Esophagus muscularis mucosa (tissue), 4 donors: ENCODE measurements at regions of chr13 and their contacts with region 1.

Region 1: DNA sequence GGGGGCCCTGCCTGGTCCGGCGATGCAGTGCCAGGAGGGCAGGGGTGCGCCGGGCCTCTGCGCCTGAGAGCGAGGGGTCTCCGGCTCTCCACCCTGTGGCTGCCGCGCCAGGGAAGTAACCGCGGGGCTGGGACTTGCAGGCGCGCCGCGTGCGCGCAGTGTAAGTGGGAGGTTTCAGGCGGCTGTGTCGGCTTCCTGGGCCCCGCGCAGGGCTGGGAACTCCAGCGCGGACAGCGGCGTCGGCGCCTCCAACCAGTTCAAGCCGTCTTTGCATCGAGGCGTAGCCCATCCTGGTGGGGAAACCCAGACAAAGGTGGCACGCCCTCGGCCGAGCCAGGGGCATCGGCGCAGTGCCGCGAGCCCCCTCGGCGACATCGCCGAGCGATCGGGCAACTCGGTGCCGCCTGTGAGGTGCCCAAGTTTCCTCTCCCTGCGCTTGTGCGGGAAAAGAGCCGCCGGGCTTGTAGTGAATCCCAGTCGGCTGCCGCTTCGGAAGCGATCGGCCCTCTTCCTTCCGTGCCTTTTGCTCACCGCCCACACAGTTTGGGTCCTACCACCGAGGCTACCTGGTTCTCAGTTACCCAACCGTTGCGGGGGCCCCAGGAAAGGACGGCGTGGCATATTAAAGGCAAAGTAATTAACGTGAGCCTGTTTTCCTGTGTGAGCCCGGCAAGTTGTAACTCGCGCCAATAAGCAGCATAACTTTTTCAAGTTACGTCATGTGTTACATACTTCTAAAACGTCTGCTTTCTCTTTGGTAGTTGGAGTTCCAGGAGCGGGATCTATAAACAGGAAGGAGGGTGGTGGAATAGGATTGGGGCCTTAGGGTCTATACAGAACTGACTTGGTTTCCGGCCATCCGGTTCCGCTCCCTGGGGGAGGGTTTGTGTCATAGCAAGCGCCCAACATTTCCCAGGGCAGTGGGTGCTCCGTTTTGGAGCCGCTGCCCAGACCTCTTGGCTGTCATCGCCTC is 1.2 kb downstream of the LRCH1 start:
- DNase-seq: no peak
- H3K4me3 ChIP-seq: peak overlapping the region; percentile 81 to 99 (median 90)
- H3K27ac ChIP-seq: peak overlapping the region; percentile 95 to 98 (median 96)
- H3K4me1 ChIP-seq: peaks cover 18 to 49% (median 46%) of the 10 kb centered on the region in 4 donors
- H3K27me3 ChIP-seq: no peaks in the 10 kb centered on the region
- CTCF ChIP-seq: peak in 2 of 3 experiments; percentile 15 to 55
- EP300 ChIP-seq: no peak
- POLR2A ChIP-seq: peak; percentile 46

Region 2: DNA sequence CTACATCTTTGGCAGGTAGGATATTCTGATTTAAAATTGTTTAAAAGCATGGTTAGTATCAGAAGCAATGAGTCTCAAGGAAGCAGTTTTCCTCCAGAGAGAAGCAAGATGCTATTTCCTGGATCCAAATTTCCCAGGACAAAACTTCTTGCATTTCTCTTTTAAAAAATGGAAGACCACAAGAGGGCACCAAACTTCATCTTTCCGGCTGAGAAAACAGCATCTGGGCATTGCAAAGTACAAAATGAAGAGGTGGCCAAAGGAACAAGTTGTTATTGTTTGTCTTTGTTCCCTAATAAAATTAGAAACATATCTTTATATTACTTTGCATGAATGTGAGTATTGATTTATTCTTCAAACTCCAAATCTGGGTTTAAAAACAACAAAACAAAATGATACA is 61.2 kb before region 1 on chr13:
- intact Hi-C with region 1: loop called (anchors 5 kb)
- DNase-seq: no peak
- H3K4me3 ChIP-seq: no peak overlapping the region
- H3K27ac ChIP-seq: no peak overlapping the region
- H3K4me1 ChIP-seq: peaks cover 0 to 16% (median 13%) of the 10 kb centered on the region in 4 donors
- H3K27me3 ChIP-seq: no peaks in the 10 kb centered on the region
- CTCF ChIP-seq: peak; percentile 54 to 63 (median 56)
- EP300 ChIP-seq: no peak
- POLR2A ChIP-seq: no peak

Region 3: DNA sequence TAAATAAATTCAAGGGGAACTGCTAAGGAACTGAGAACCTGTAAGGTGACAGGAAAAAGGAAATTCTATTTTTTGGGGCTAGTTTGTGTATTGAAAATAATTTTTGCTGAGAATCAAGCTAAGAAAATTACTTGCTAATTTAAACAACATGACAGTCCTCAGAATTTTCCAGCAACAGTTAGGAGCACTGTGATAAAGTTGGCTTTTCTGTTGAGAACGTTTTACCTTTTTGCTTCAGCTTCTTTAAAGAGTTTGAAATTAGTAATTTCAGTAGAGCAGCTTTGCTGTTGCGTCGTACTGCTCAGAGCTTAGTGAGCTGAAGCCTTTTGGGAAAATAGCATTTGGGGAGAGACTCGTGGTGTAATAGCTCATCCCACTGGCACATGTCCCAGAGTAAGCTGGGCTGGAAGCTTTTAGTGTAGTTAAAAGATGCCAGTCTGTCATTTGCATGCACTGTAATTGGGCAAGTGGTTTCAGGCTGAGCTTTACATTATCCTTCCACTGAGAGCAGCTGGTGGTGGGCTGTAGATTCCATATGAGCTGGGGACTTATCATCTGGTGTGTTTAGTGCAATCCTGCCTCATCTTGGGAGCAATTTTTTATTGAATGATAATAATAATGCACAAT is 68.6 kb after region 1 on chr13:
- intact Hi-C with region 1: loop called (anchors 5 kb)
- DNase-seq: no peak
- H3K4me3 ChIP-seq: peak overlapping the region in 1 of 4 donors; percentile 11
- H3K27ac ChIP-seq: peak overlapping the region; percentile 48 to 74 (median 67)
- H3K4me1 ChIP-seq: peaks cover 53 to 87% (median 76%) of the 10 kb centered on the region in 4 donors
- H3K27me3 ChIP-seq: no peaks in the 10 kb centered on the region
- CTCF ChIP-seq: no peak
- EP300 ChIP-seq: no peak
- POLR2A ChIP-seq: no peak

Region 4: DNA sequence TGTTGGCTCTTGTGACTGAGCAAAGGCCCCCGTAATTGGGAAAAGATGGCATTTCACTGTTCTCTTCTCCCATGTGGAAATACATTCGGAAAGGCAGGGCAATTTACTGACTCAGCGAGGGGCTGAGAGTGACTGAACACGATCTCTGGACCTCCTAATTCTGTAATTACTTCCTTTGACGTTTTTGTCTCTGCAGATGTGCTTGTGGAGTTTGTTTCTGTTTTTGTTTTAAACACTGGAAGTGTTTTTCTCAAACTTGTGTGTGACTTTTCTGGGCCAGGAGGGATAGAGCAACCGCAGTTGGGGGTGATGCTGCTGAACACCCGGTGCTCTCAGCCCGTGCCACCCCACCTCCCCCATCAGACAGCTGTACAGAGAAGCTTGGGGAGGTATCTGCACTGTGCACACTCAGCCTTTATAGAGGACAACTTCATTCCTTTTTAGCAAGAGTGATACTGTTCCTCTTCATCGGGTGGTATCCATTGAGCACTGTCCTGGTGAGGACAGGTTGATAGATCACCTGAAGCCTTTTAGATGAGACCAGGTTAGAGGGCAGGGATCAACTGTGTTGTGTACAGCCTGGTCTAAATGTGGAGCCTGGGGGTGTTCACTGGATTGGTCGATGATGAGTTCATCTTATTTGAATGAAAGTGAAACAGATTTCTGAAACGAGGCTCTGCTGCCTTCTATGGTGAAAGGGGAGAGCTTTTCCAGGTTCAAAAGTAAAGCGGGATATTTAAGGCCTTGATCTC is 125.4 kb after region 1 on chr13:
- intact Hi-C with region 1: loop called (anchors 5 kb)
- DNase-seq: no peak
- H3K4me3 ChIP-seq: peak overlapping the region; percentile 34 to 54 (median 45)
- H3K27ac ChIP-seq: peak overlapping the region; percentile 77 to 80 (median 78)
- H3K4me1 ChIP-seq: peaks cover 30 to 68% (median 65%) of the 10 kb centered on the region in 4 donors
- H3K27me3 ChIP-seq: no peaks in the 10 kb centered on the region
- CTCF ChIP-seq: peak in 1 of 3 experiments; percentile 21
- EP300 ChIP-seq: no peak
- POLR2A ChIP-seq: no peak

Region 5: DNA sequence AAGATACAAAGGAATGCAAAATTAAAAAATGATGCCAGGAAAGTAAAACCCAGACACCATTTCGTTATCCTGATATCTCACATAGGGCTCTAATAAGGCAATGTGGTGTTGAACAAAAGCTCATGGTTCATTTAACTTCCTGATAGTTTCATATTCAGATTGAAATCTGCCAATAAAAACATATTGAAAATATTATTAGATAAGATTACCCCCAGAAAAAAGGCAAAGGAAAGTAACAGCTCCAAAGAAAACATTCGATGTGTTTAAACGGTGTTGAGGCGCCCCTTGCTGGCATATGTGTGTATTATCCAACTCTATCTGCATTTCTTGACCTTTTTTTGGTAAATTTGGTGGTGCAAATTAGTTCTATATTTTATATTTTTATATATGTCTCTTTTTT is 166.9 kb after region 1 on chr13:
- intact Hi-C with region 1: loop called (anchors 1 kb)
- DNase-seq: no peak
- H3K4me3 ChIP-seq: no peak overlapping the region
- H3K27ac ChIP-seq: no peak overlapping the region
- H3K4me1 ChIP-seq: no peaks in the 10 kb centered on the region
- H3K27me3 ChIP-seq: no peaks in the 10 kb centered on the region
- CTCF ChIP-seq: peak; percentile 66 to 74 (median 67)
- EP300 ChIP-seq: no peak
- POLR2A ChIP-seq: no peak

Region 6: GRCh38 chr13:46796515-46797474 is 242.6 kb after region 1 on chr13 and contains the start of gene ESD:
- intact Hi-C with region 1: loop called (anchors 5 kb)
- DNase-seq: peak; percentile 99
- H3K4me3 ChIP-seq: peak within 1 kb of the TSS; percentile 69 to 91 (median 84)
- H3K27ac ChIP-seq: peak within 1 kb of the TSS; percentile 87 to 95 (median 89)
- H3K4me1 ChIP-seq: peaks cover 26 to 42% (median 38%) of the 10 kb centered on the region in 4 donors
- H3K27me3 ChIP-seq: no peaks in the 10 kb centered on the region
- CTCF ChIP-seq: no peak
- EP300 ChIP-seq: no peak
- POLR2A ChIP-seq: peak; percentile 38
- total RNA-seq, gene ESD: 115 to 150 (median 129) TPM

Region 7: GRCh38 chr13:46961719-46962118 is 407.5 kb after region 1 on chr13:
- intact Hi-C with region 1: no loop called
- DNase-seq: no peak
- H3K4me3 ChIP-seq: no peak overlapping the region
- H3K27ac ChIP-seq: no peak overlapping the region
- H3K4me1 ChIP-seq: no peaks in the 10 kb centered on the region
- H3K27me3 ChIP-seq: no peaks in the 10 kb centered on the region
- CTCF ChIP-seq: no peak
- EP300 ChIP-seq: no peak
- POLR2A ChIP-seq: no peak